Thyroid gland (tissue), 4 donors: ENCODE measurements at regions of chr9 and their contacts with region 1.

Region 1: GRCh38 chr9:19028835-19029451 is 4.1 kb downstream of the SAXO1 start:
- DNase-seq: peak; percentile 28 to 31
- H3K4me3 ChIP-seq: no peak overlapping the region
- H3K27ac ChIP-seq: no peak overlapping the region
- H3K4me1 ChIP-seq: no peaks in the 10 kb centered on the region
- H3K27me3 ChIP-seq: no peaks in the 10 kb centered on the region
- CTCF ChIP-seq: peak; percentile 42 to 76 (median 62)
- POLR2A ChIP-seq: no peak

Region 2: DNA sequence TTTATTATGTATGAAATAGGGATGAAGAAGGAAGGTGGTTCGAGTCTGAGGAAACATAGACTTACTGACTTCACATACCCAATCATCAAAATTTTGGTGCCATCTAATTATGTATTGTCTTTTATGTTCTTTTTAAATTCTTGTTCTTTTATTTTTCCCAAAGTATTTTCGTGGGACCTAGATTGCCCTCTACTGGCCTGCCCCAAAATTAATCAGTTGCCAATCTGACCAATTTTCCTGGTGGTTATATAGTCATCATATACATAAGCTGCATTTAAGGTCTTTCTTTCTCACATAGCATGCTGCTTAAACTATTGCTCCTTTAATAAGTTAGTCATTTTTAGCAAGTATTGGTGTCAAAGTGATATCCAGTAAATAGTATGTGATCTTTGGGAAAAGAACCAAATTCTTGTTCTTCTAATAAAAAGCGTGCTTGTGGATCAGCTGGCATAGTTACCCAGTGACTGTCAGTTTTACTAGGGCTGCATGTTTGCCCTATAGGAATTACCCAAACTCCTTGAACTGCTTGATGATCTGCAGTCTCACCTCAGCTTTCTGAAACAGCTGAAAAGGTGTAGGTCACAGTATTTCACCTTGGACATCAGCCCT is 1226.6 kb before region 1 on chr9:
- intact Hi-C with region 1: loop called (anchors 10 kb)
- DNase-seq: no peak
- H3K4me3 ChIP-seq: no peak overlapping the region
- H3K27ac ChIP-seq: no peak overlapping the region
- H3K4me1 ChIP-seq: no peaks in the 10 kb centered on the region
- H3K27me3 ChIP-seq: no peaks in the 10 kb centered on the region
- CTCF ChIP-seq: peak in 3 of 6 experiments; percentile 51 to 64 (median 53)
- POLR2A ChIP-seq: no peak

Region 3: GRCh38 chr9:18255158-18255629 is 773.7 kb before region 1 on chr9:
- intact Hi-C with region 1: loop called (anchors 5 kb)
- DNase-seq: peak; percentile 74 to 88
- H3K4me3 ChIP-seq: no peak overlapping the region
- H3K27ac ChIP-seq: no peak overlapping the region
- H3K4me1 ChIP-seq: peaks cover 3 to 4% of the 10 kb centered on the region in 2 donors
- H3K27me3 ChIP-seq: no peaks in the 10 kb centered on the region
- CTCF ChIP-seq: peak; percentile 87 to 97 (median 93)
- POLR2A ChIP-seq: no peak